Right ventricle myocardium inferior (tissue), 1 donor: ENCODE measurements at regions of chr10 and their contacts with region 1.

Region 1: GRCh38 chr10:58513188-58514110 is 777 bp downstream of the BICC1 start:
- DNase-seq: peak; percentile 80
- ATAC-seq: peak; percentile 89

Region 2: DNA sequence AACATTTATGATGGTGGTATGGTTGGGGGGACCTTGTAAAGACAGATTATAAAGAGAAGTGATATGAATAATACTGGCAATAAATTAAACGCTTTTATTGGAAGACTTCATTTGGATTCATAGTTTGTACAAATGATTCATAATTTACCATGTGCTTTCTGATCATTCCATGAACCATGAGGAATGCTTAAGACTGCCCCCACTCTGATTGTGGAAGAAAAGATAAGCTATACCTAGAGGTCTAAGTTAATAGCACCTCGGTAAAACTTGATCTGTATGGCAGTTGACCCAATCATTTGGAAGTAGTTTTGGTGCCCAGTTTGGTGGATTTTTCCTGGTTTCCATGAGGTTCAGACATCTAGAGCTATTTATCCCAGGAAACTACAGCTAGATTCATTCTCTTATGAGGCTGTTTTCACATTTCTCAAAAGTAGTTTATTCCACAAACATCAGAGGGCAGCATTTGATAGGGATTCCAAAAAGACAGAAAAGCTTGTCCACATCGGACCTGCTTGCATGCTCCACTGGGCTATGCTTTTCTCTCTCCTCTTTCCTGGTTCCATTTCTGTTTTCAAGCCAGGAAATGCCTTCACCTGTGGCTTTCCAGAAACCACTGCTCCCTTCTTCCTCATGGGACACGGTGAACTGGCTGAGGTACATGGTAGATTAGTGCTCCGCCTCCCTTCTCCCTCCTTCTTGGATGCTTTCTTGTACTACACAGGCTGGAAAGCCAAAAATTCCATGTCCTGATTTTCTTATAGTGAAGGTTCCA is 99.0 kb before region 1 on chr10:
- intact Hi-C with region 1: loop called (anchors 10 kb)
- DNase-seq: no peak
- ATAC-seq: peak; percentile 83

Region 3: GRCh38 chr10:58775960-58776567 is 262.6 kb after region 1 on chr10:
- intact Hi-C with region 1: loop called (anchors 10 kb)
- DNase-seq: no peak
- ATAC-seq: peak; percentile 96